ENCODE measurements at regions of chr1 and their contacts with region 1.

Region 1: DNA sequence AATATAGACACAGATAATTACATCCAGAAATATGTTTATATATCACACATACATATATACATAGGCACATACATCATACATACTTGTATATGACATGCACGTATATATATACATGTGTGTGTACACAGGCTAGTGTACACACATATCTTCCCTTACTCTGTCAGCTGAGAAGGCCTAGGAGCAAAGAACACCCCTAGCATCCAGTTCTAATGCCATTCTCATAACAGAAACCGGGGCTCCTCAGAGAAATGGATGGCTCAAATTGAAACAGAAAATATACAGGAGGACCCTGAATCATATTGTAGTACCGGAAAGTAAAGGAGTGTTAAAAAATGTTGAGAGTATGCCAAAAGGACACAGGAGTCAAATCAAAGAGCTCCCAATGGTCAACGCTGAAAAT is 19.7 kb upstream of the HYI start:
- DNase-seq: no peak
- H3K4me3 ChIP-seq: no peak overlapping the region
- H3K27ac ChIP-seq: no peak overlapping the region
- H3K4me1 ChIP-seq: no peaks in the 10 kb centered on the region
- H3K27me3 ChIP-seq: no peaks in the 10 kb centered on the region
- CTCF ChIP-seq: no peak
- POLR2A ChIP-seq: no peak

Region 2: GRCh38 chr1:42231253-42231652 is 1242.2 kb before region 1 on chr1:
- intact Hi-C with region 1: loop called (anchors 10 kb)
- DNase-seq: no peak
- H3K4me3 ChIP-seq: no peak overlapping the region
- H3K27ac ChIP-seq: no peak overlapping the region
- H3K4me1 ChIP-seq: no peaks in the 10 kb centered on the region
- H3K27me3 ChIP-seq: no peaks in the 10 kb centered on the region
- CTCF ChIP-seq: no peak
- POLR2A ChIP-seq: no peak

Measured in vagina (tissue), 2 donors.